Dorsolateral prefrontal cortex (tissue), 120 donors: ENCODE measurements at regions of chr10 and their contacts with region 1.

Region 1: DNA sequence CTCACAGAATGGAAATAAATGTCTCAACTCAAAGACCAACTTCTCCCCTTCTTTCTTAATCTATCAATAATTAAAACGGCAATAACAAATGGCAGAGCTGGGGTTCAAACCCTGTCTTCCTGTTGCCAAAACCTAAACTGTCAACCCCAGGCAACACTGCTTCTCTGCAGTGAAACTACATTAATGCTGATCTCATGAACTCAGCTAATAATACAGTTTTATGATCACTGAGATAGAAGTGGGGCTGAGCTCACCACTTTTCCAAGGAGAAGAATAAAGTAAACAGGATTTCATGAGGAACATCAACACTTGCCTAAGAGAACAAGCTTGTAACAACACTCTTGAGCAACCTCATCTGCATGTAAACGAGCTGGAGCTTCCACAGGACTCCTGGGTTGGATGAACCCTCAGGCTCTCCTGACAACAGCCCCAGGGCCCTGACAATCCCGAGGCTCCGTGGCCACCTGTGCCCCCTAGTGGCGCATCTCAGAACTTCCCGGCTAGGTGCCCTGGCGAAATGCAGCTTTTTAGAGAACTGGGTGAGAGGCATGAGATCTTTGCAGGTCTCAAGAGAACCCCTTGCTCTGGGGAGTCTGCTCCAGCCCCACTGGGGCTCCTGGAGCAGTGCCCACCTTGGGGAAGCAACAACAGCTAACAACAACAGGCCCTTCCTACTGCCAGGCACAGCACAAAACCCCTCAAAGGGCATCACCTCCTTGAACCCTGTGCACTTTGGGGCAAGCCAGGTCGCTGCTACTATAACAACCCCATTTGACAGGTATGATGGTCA is 169.3 kb downstream of the SH3PXD2A start:
- DNase-seq: peak; percentile 72 to 89 (median 86)
- H3K4me3 ChIP-seq: peak overlapping the region in 2 of 59 donors; percentile 2 to 8
- H3K27ac ChIP-seq: peak overlapping the region in 46 of 59 donors; percentile 0 to 78 (median 58)
- H3K27me3 ChIP-seq: no peaks in the 10 kb centered on the region
- CTCF ChIP-seq: peak; percentile 88 to 99 (median 97)

Region 2: DNA sequence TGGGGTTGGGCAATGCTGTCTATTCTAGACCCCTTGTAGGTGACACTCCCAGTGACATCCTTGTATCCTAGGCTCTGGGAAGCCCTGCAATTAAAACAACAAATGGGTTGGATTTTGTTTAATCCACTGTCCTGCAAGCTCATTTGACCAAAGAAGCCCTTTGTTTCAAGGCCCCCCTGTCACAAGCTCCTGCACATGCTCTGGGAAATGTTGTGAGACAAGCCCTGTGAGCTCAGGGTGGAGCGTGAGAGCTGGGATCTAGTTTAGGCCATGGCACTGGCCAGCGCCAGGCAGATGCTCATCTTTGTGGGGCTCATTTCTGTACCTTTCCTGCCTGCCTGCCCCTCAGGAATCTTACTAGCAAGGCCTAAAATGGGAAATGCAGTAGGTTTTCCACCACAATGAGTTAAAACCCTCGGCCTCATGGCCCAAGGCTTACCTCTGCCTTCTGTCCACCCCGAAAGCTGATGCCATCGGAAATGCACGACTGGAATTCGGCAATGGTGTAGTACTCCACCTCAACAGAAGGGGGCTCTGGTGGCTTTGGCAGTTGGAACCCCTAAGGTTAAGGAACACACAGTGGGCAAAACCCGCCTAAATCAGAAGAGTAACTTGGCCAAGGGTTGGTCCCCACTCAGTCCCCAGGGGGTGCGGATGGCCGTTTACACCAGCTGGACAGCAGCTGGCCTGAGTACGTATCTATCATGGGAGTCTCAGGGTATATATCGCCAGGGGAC is 80.5 kb before region 1 on chr10:
- intact Hi-C with region 1: loop called (anchors 1 to 2 kb)
- DNase-seq: peak in 4 of 10 donors; percentile 51 to 70 (median 67)
- H3K4me3 ChIP-seq: no peak overlapping the region
- H3K27ac ChIP-seq: peak overlapping the region in 52 of 59 donors; percentile 8 to 84 (median 65)
- H3K27me3 ChIP-seq: no peaks in the 10 kb centered on the region
- CTCF ChIP-seq: peak; percentile 48 to 87 (median 77)

Region 3: DNA sequence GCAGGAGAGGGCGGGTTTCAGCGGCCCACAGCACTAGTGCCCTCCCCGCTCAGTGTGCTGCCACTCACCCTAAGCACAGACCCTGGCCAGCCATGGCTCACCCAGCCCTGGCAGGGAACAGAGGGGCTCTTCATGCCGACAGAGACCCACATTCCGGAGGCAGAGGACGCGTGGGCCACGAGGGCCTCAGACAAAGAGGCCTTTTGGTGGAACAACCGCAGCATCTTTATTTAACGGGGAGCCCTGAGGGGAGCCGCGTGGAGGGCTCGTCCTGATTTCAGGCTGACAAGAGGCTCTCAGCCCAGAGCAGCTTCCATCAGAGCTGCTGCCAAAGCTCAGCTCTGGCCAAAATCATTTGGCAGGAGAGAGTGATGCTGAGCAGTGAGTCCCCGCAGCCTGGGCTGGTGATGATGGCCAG is 41.5 kb after region 1 on chr10:
- intact Hi-C with region 1: no loop called
- DNase-seq: peak; percentile 52 to 88 (median 75)
- H3K4me3 ChIP-seq: peak overlapping the region in 18 of 59 donors; percentile 1 to 40 (median 14)
- H3K27ac ChIP-seq: peak overlapping the region in 55 of 59 donors; percentile 4 to 95 (median 71)
- H3K27me3 ChIP-seq: no peaks in the 10 kb centered on the region
- CTCF ChIP-seq: peak in 4 of 56 donors; percentile 15 to 41 (median 18)

Region 4: GRCh38 chr10:103763374-103764202 is 77.5 kb after region 1 on chr10:
- intact Hi-C with region 1: no loop called
- DNase-seq: no peak
- H3K4me3 ChIP-seq: no peak overlapping the region
- H3K27ac ChIP-seq: peak overlapping the region in 23 of 59 donors; percentile 2 to 61 (median 30)
- H3K27me3 ChIP-seq: no peaks in the 10 kb centered on the region
- CTCF ChIP-seq: no peak

Region 5: DNA sequence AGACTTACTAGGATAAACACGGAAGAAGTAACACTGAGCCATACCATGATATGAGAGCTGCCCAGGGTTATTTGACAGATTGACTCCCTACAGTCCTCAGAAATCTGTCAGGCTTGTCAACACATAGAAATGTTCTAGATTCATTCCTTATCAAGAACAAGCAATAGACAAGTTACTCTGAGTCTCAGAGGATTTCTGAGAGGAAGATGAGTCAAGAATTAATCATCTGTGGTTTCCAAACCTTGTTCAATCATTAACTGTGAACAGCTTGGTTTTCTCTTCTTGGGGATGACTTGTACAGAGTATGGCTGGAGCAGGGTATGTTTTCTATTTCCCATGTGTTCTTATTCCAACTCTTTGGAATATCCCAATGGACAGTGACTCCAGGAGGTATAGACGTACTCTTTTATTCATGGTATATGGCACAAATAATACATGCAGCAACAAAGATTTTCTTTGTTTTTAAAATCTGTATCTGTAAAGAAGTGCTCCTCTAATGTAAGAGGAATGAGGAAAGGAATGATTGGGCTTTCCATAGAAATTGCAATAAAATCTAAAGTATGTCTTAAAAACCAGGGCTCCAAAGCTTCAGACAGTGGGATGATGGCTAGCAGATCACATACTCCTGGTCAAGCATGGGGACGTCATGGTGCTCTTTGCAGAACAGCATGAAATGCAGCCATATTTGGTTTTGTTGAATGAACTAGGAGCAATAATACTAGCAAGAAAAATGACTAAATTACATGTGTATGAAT is 424.0 kb after region 1 on chr10:
- intact Hi-C with region 1: no loop called
- DNase-seq: no peak
- H3K4me3 ChIP-seq: no peak overlapping the region
- H3K27ac ChIP-seq: no peak overlapping the region
- H3K27me3 ChIP-seq: peaks cover 0 to 3% (median 0%) of the 10 kb centered on the region in 45 donors
- CTCF ChIP-seq: no peak